PC-9 (cell line): ENCODE measurements at regions of chr5 and their contacts with region 1.

Region 1: GRCh38 chr5:138542956-138543729 is at the start of gene ETF1:
- DNase-seq: peak; percentile 96 to 99
- H3K4me3 ChIP-seq: peak within 1 kb of the TSS; percentile 66
- H3K27ac ChIP-seq: peak within 1 kb of the TSS; percentile 77
- H3K4me1 ChIP-seq: peaks cover 45% of the 10 kb centered on the region
- H3K27me3 ChIP-seq: no peaks in the 10 kb centered on the region
- CTCF ChIP-seq: no peak
- total RNA-seq, gene ETF1: 61.8 and 84.9 TPM in 2 replicates

Region 2: GRCh38 chr5:138438724-138439476 is 104.2 kb before region 1 on chr5 and contains the start of gene REEP2:
- CTCF ChIA-PET with region 1: no interaction called
- POLR2A ChIA-PET with region 1: interaction called, 10 read pairs
- intact Hi-C with region 1: no loop called
- DNase-seq: peak in 1 of 2 experiments; percentile 36
- H3K4me3 ChIP-seq: peak within 1 kb of the TSS; percentile 52; the same call in 1 of the 2 replicates
- H3K27ac ChIP-seq: no peak within 1 kb of the TSS
- H3K4me1 ChIP-seq: 0 out of 2 replicates have a peak, but pooled peaks cover 4% of the 10 kb centered on the region
- H3K27me3 ChIP-seq: peaks cover 10% of the 10 kb centered on the region
- CTCF ChIP-seq: no peak
- total RNA-seq, gene REEP2: 0.87 and 1.3 TPM in 2 replicates

Region 3: DNA sequence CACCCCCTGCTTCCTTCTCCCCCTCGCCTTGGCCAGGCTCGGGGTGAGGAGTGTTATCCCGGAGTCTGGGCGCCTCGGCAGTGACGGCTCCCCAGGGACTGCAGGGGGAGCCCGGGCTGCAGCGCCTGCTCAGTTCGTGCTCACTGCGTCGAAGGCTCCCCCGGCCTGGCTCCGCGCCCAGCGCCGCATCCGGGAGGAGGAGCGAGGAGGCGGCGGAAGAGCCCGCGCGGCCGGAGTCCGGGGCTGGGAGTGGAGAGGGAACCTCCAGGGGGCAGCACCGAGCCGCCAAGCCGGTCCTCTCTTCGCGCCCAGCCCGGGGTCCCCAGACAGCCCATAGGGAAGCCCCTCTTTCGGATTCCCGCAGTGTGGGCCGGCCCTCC is 79.1 kb before region 1 on chr5:
- CTCF ChIA-PET with region 1: no interaction called
- POLR2A ChIA-PET with region 1: interaction called, 6 read pairs
- intact Hi-C with region 1: loop called (anchors 1 kb)
- DNase-seq: peak; percentile 78 to 94
- H3K4me3 ChIP-seq: peak overlapping the region; percentile 80
- H3K27ac ChIP-seq: peak overlapping the region; percentile 81
- H3K4me1 ChIP-seq: peaks cover 6% of the 10 kb centered on the region
- H3K27me3 ChIP-seq: no peaks in the 10 kb centered on the region
- CTCF ChIP-seq: peak; percentile 93